HEK293T (cell line): ENCODE measurements at regions of chr16 and their contacts with region 1.

Region 1: DNA sequence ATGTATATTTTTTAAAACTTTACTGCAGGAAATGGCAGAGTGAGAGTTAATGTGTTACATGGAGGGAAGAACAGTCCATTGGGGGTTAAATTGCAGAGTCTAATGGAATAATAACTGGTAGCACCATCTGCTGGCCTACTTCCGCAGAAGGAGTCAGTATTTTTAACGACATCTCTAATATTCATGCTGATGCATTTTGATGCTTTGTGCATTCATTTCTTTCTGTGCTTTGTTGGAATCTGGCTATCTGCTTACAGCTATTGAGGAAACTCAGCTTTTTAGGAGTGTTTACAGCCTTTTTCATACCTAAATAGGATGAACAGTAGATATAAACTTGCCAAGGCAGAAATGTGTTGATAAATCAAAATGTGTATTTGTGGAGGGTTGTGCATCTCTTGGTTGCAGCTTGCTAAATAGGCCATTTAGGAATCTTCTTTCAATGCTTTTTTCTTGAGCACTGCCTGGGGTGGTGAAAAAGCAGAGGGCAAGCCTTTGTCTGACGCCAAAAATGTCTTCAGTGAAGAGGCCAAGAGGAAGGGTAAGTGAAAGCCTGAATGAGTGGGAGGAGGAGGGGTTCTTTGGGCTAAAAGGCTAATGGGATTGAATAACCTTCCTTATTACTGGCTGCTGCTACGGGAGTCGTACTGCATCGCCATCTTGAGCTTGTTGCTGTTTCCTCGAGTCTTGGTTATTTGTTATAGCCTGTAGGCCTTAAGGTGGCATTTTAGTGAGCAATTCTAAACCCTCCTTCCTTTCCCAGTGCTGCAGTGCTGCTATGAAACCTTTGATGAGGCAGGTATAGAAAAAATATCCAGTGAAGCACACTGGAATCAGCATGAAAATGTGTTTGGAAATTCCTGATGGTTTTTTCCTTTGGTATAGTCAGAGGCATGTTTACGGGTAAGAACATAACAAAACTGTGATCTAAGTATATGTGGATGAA is 153.3 kb downstream of the CHD9 start:
- DNase-seq: peak; percentile 76

Region 2: GRCh38 chr16:53054670-53055485 is 153.2 kb before region 1 on chr16 and contains the start of gene CHD9:
- CTCF ChIA-PET with region 1: interaction called, 7 read pairs
- POLR2A ChIA-PET with region 1: interaction called, 13 read pairs
- DNase-seq: peak; percentile 92